ENCODE measurements at regions of chr5 and their contacts with region 1.

Region 1: DNA sequence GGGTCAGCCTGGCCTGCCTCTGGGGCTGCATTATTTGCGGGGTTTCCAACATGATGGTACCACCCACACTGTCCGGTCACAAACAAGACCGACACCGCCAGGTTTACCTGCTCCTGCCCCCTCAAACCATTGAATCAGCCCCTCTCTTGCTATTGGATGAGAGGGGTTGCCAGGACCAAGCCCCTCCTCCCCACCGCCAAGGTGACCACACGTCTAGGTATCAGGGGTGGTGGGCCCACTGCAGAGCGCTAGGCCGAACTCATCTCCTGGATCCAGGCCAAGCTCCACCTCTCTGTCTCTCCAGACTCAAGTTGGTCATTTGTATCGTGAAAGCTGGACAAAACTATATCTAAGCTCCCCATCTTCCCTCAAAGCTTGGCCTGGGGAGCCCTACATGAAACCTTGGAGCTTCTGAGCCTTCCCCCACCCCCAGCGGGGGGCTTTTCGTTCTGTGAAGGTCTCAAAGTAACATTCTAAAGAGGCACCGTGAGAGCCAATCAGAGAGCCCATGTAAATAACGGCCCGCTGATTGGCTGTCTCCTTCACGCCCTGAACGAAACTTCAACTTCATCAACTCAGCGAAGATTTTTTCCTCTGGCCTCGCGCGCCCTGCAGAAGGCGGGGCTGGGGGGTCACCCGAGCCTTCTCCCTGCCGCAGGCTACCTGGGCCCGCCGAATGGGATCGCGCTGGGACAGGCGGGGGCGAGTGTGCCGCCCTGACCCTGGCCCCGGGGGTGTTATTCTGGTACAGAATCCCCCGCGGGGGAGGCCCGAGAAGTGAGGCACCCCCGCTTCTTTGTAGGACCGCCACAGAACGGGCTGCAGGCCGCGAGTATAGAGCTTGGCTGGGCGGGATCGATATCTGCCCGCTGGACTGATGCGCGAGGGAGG is 49.6 kb upstream of the PSD2 start:
- DNase-seq: peak; percentile 66 to 79
- ATAC-seq: peak; percentile 39 to 50 (median 48)
- H3K4me3 ChIP-seq: peak overlapping the region; percentile 59
- H3K4me3 Mint-ChIP-seq: peak overlapping the region; percentile 94
- H3K27ac ChIP-seq: peak overlapping the region; percentile 99
- H3K27ac Mint-ChIP-seq: peak overlapping the region; percentile 94 to 98
- H3K4me1 ChIP-seq: peaks cover 48% of the 10 kb centered on the region
- H3K4me1 Mint-ChIP-seq: peaks cover 38 to 66% of the 10 kb centered on the region in 2 donors
- H3K27me3 ChIP-seq: no peaks in the 10 kb centered on the region
- H3K27me3 Mint-ChIP-seq: no peaks in the 10 kb centered on the region
- CTCF ChIP-seq: no peak

Region 2: GRCh38 chr5:139378101-139378835 is 367.8 kb before region 1 on chr5:
- intact Hi-C with region 1: no loop called
- DNase-seq: no peak
- ATAC-seq: no peak
- H3K4me3 ChIP-seq: no peak overlapping the region
- H3K4me3 Mint-ChIP-seq: no peak overlapping the region
- H3K27ac ChIP-seq: no peak overlapping the region
- H3K27ac Mint-ChIP-seq: no peak overlapping the region
- H3K4me1 ChIP-seq: no peaks in the 10 kb centered on the region
- H3K4me1 Mint-ChIP-seq: peaks cover 0 to 4% of the 10 kb centered on the region in 2 donors
- H3K27me3 ChIP-seq: no peaks in the 10 kb centered on the region
- H3K27me3 Mint-ChIP-seq: no peaks in the 10 kb centered on the region
- CTCF ChIP-seq: no peak

Region 3: DNA sequence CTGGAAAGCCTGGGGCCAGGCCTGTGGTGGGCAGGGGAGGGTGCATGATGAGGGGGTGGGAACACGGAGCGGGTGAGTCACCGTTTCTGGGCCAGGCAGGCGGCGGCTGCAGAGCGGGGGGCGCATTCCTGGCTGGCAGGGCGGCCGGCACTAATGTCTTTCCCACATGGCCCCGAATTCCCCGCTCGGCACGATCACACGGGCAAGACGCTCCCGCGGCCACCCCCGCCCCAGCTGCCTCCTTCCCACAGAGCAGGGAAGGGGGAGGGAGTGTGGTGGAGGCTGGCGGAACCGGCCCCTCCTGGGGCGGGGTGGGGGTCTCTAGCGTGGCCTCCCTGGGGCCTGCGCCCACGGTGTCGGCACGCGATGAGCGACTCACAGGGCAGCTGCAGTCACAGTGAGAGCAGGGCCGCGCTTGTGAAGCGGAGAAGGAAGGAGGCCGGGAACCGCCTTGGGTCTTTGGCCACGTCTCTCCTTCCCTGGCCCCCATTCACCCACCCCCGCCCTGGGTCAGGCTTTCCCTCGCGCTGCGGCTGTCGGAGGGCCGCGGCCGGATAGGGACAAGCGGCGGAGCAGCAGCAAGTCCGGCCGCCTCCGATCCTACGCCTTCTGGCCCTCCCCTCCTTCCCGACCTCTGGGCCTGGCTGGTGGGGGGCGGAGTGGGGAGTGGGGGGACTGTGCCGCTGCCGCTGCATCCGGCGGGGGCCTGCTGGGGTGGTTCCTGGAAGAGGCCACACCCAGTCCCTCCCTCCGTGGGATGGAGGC is 49.0 kb before region 1 on chr5:
- intact Hi-C with region 1: loop called (anchors 10 kb)
- DNase-seq: peak; percentile 37 to 49
- ATAC-seq: peak; percentile 24 to 75 (median 52)
- H3K4me3 ChIP-seq: peak overlapping the region; percentile 30
- H3K4me3 Mint-ChIP-seq: peak overlapping the region; percentile 91
- H3K27ac ChIP-seq: no peak overlapping the region
- H3K27ac Mint-ChIP-seq: peak overlapping the region; percentile 73 to 84
- H3K4me1 ChIP-seq: peaks cover 66% of the 10 kb centered on the region
- H3K4me1 Mint-ChIP-seq: peaks cover 49 to 57% of the 10 kb centered on the region in 2 donors
- H3K27me3 ChIP-seq: no peaks in the 10 kb centered on the region
- H3K27me3 Mint-ChIP-seq: no peaks in the 10 kb centered on the region
- CTCF ChIP-seq: no peak

Region 4: GRCh38 chr5:139711067-139711905 is 34.8 kb before region 1 on chr5:
- intact Hi-C with region 1: loop called (anchors 1 kb)
- DNase-seq: peak; percentile 71 to 84
- ATAC-seq: peak; percentile 62 to 77 (median 70)
- H3K4me3 ChIP-seq: peak overlapping the region; percentile 65
- H3K4me3 Mint-ChIP-seq: peak overlapping the region; percentile 83
- H3K27ac ChIP-seq: peak overlapping the region; percentile 97
- H3K27ac Mint-ChIP-seq: peak overlapping the region; percentile 89 to 94
- H3K4me1 ChIP-seq: peaks cover 48% of the 10 kb centered on the region
- H3K4me1 Mint-ChIP-seq: peaks cover 32 to 43% of the 10 kb centered on the region in 2 donors
- H3K27me3 ChIP-seq: no peaks in the 10 kb centered on the region
- H3K27me3 Mint-ChIP-seq: no peaks in the 10 kb centered on the region
- CTCF ChIP-seq: peak; percentile 31

Region 5: GRCh38 chr5:139755892-139756671 is 10.0 kb after region 1 on chr5:
- intact Hi-C with region 1: loop called (anchors 1 kb)
- DNase-seq: peak; percentile 47 to 51
- ATAC-seq: peak; percentile 38 to 79 (median 55)
- H3K4me3 ChIP-seq: peak overlapping the region; percentile 23
- H3K4me3 Mint-ChIP-seq: peak overlapping the region; percentile 61
- H3K27ac ChIP-seq: no peak overlapping the region
- H3K27ac Mint-ChIP-seq: peak overlapping the region; percentile 3 to 81
- H3K4me1 ChIP-seq: peaks cover 38% of the 10 kb centered on the region
- H3K4me1 Mint-ChIP-seq: peaks cover 19 to 54% of the 10 kb centered on the region in 2 donors
- H3K27me3 ChIP-seq: peaks cover 2% of the 10 kb centered on the region
- H3K27me3 Mint-ChIP-seq: peaks cover 0 to 12% of the 10 kb centered on the region in 2 donors
- CTCF ChIP-seq: no peak

Region 6: DNA sequence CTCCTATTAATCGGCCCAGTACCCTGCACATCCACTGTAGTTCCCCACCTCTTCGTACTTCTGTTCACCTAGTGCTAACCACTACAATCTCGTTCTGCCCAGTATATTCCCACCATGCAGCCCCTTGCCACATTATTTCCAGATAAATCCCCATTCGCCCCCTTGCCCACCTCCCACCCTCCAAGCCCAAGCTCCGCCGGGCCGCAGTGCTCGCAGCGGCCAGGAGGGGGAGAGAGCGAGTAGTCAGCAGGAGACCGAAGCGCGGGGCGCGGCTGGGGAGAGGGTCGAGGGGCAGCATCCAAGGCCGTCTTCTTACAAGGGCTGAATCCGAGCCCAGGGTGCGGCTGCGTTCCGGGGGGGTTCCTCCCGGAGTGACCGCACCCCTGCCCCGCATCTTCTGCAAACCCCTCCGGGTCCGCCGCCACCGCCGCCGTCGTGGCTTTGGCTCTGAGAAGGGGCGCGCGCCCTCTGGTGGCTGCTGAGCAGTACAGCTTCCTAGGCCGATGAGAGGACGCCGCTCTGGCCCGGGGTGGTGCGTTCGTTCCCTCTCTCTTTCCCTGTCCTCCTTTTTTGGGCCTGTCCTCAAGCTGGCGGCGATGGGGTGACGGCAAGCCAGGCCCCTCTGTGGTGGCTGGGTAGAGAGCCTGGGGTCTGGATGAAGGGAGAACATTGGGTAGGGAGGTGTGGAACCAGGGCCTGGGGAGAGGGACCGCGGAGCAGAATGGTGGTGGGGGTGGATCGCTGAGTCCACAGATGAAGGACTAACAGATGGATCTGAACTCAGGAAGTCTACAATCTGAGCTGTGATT is 19.6 kb after region 1 on chr5:
- intact Hi-C with region 1: loop called (anchors 1 kb)
- DNase-seq: peak; percentile 86 to 91
- ATAC-seq: peak; percentile 86 to 93 (median 88)
- H3K4me3 ChIP-seq: peak overlapping the region; percentile 59
- H3K4me3 Mint-ChIP-seq: peak overlapping the region; percentile 78
- H3K27ac ChIP-seq: peak overlapping the region; percentile 36
- H3K27ac Mint-ChIP-seq: peak overlapping the region; percentile 51 to 92
- H3K4me1 ChIP-seq: peaks cover 25% of the 10 kb centered on the region
- H3K4me1 Mint-ChIP-seq: peaks cover 13 to 26% of the 10 kb centered on the region in 2 donors
- H3K27me3 ChIP-seq: peaks cover 10% of the 10 kb centered on the region
- H3K27me3 Mint-ChIP-seq: peaks cover 0 to 6% of the 10 kb centered on the region in 2 donors
- CTCF ChIP-seq: peak; percentile 100